Endothelial cell of umbilical vein (primary cell): ENCODE measurements at regions of chr18 and their contacts with region 1.

Region 1: GRCh38 chr18:26548429-26549262 is at the start of gene KCTD1:
- DNase-seq: peak; percentile 79
- H3K4me3 ChIP-seq: peak within 1 kb of the TSS; percentile 48 to 64 (median 58)
- H3K27ac ChIP-seq: no peak within 1 kb of the TSS
- H3K4me1 ChIP-seq: peaks cover 31% of the 10 kb centered on the region
- H3K27me3 ChIP-seq: peaks cover 28 to 38% of the 10 kb centered on the region in 2 experiments
- CTCF ChIP-seq: no peak
- POLR2A ChIP-seq: no peak
- total RNA-seq, gene KCTD1: 12.1 and 13.3 TPM in 2 replicates

Region 2: GRCh38 chr18:26226229-26227005 is 322.2 kb before region 1 on chr18 and contains the start of gene TAF4B:
- CTCF ChIA-PET with region 1: no interaction called
- POLR2A ChIA-PET with region 1: no interaction called
- dilution Hi-C with region 1: no loop called
- intact Hi-C with region 1: loop called (anchors 10 kb)
- DNase-seq: peak; percentile 93
- H3K4me3 ChIP-seq: peak within 1 kb of the TSS; percentile 70 to 85 (median 75)
- H3K27ac ChIP-seq: peak within 1 kb of the TSS; percentile 28
- H3K4me1 ChIP-seq: peaks cover 11% of the 10 kb centered on the region
- H3K27me3 ChIP-seq: peaks cover 6 to 13% of the 10 kb centered on the region in 2 experiments
- CTCF ChIP-seq: no peak
- POLR2A ChIP-seq: no peak
- total RNA-seq, gene TAF4B: 1.2 and 2.0 TPM in 2 replicates

Region 3: GRCh38 chr18:26405190-26405801 is 143.3 kb before region 1 on chr18:
- CTCF ChIA-PET with region 1: interaction called, 15 read pairs
- POLR2A ChIA-PET with region 1: interaction called, 3 read pairs
- dilution Hi-C with region 1: no loop called
- intact Hi-C with region 1: no loop called
- DNase-seq: peak; percentile 46
- H3K4me3 ChIP-seq: no peak overlapping the region
- H3K27ac ChIP-seq: no peak overlapping the region
- H3K4me1 ChIP-seq: no peaks in the 10 kb centered on the region
- H3K27me3 ChIP-seq: no peaks in the 10 kb centered on the region
- CTCF ChIP-seq: peak; percentile 35 to 53
- POLR2A ChIP-seq: no peak

Region 4: GRCh38 chr18:26458526-26459232 is 90.0 kb before region 1 on chr18:
- CTCF ChIA-PET with region 1: interaction called, 6 read pairs
- POLR2A ChIA-PET with region 1: no interaction called
- dilution Hi-C with region 1: no loop called
- intact Hi-C with region 1: loop called (anchors 5 kb)
- DNase-seq: peak; percentile 18
- H3K4me3 ChIP-seq: no peak overlapping the region
- H3K27ac ChIP-seq: peak overlapping the region; percentile 27
- H3K4me1 ChIP-seq: peaks cover 30% of the 10 kb centered on the region
- H3K27me3 ChIP-seq: no peaks in the 10 kb centered on the region
- CTCF ChIP-seq: no peak
- POLR2A ChIP-seq: no peak

Region 5: GRCh38 chr18:26480897-26481895 is 67.5 kb before region 1 on chr18:
- CTCF ChIA-PET with region 1: interaction called, 12 read pairs
- POLR2A ChIA-PET with region 1: no interaction called
- dilution Hi-C with region 1: no loop called
- intact Hi-C with region 1: loop called (anchors 1 kb)
- DNase-seq: peak; percentile 92
- H3K4me3 ChIP-seq: no peak overlapping the region
- H3K27ac ChIP-seq: peak overlapping the region; percentile 92
- H3K4me1 ChIP-seq: peaks cover 31% of the 10 kb centered on the region
- H3K27me3 ChIP-seq: no peaks in the 10 kb centered on the region
- CTCF ChIP-seq: no peak
- POLR2A ChIP-seq: no peak

Region 6: GRCh38 chr18:26656944-26657536 is 108.4 kb after region 1 on chr18:
- CTCF ChIA-PET with region 1: interaction called, 7 read pairs
- POLR2A ChIA-PET with region 1: no interaction called
- dilution Hi-C with region 1: no loop called
- intact Hi-C with region 1: loop called (anchors 2 kb)
- DNase-seq: peak; percentile 53
- H3K4me3 ChIP-seq: peak overlapping the region; percentile 38 to 63 (median 50)
- H3K27ac ChIP-seq: no peak overlapping the region
- H3K4me1 ChIP-seq: peaks cover 8% of the 10 kb centered on the region
- H3K27me3 ChIP-seq: peaks cover 51 to 72% of the 10 kb centered on the region in 2 experiments
- CTCF ChIP-seq: peak in 1 of 2 donors; percentile 50
- POLR2A ChIP-seq: no peak

Region 7: GRCh38 chr18:26667046-26667445 is 118.4 kb after region 1 on chr18:
- CTCF ChIA-PET with region 1: no interaction called
- POLR2A ChIA-PET with region 1: no interaction called
- dilution Hi-C with region 1: no loop called
- intact Hi-C with region 1: no loop called
- DNase-seq: no peak
- H3K4me3 ChIP-seq: no peak overlapping the region
- H3K27ac ChIP-seq: no peak overlapping the region
- H3K4me1 ChIP-seq: no peaks in the 10 kb centered on the region
- H3K27me3 ChIP-seq: peaks cover 4 to 7% of the 10 kb centered on the region in 2 experiments
- CTCF ChIP-seq: no peak
- POLR2A ChIP-seq: no peak